SK-N-SH (cell line): ENCODE measurements at regions of chr10 and their contacts with region 1.

Region 1: GRCh38 chr10:97234400-97234799 is 48.6 kb upstream of the SLIT1 start:
- DNase-seq: peak; percentile 49
- H3K4me3 ChIP-seq: no peak overlapping the region
- H3K27ac ChIP-seq: no peak overlapping the region
- H3K4me1 ChIP-seq: no peaks in the 10 kb centered on the region
- H3K27me3 ChIP-seq: no peaks in the 10 kb centered on the region
- CTCF ChIP-seq: peak; percentile 82
- EP300 ChIP-seq: no peak
- RAD21 ChIP-seq: peak; percentile 84

Region 2: DNA sequence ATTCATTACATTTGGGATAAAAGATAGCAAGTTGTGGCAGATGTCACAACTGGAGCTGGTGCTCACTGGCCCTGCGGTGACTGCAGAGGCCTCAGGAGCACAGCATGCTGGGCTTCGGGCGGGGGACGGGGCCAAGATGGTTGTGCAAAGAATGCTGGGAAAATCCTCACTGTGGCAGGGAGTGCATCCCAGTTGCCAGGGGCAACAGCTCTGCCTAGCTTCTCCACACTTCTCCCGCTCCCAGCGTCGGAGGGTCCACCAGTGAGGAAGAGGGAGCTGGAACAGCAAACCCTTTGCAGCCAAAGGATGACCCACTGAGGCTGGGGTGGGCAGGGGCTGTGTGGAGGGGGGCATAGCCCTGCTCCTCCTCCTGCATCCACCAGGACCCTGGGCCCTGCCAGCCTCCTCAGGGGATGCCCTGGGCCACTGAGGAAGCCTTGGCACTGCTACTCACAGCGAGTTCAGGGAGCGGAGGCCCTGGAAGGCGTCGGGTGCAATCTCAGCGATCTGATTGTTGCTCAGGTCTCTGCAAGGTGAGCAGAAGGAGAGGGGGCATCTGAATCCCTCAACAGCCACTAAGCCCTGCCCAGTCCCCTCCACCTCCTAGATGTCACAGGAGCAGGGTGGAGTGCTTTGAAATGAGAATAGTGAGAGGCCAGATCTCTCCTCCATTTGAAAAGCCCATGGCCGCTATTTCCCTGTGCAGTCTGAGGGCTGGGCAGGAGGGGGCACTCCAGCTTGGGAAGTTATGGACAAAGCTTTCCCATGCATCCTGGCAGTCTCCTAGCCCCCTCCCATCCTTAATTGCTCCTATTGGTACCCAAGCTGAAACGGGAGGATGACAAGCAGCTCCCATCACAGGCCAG is 175.2 kb before region 1 on chr10:
- CTCF ChIA-PET with region 1: interaction called, 24 read pairs
- POLR2A ChIA-PET with region 1: no interaction called
- DNase-seq: peak; percentile 54
- H3K4me3 ChIP-seq: no peak overlapping the region
- H3K27ac ChIP-seq: no peak overlapping the region
- H3K4me1 ChIP-seq: peaks cover 0 to 5% of the 10 kb centered on the region in 2 experiments; a peak in 1 of 4 replicates
- H3K27me3 ChIP-seq: no peaks in the 10 kb centered on the region; the same call in 1 of the 2 replicates
- CTCF ChIP-seq: no peak
- EP300 ChIP-seq: no peak
- RAD21 ChIP-seq: 0 out of 2 replicates have a peak, but pooled peaks have one; percentile 10

Region 3: DNA sequence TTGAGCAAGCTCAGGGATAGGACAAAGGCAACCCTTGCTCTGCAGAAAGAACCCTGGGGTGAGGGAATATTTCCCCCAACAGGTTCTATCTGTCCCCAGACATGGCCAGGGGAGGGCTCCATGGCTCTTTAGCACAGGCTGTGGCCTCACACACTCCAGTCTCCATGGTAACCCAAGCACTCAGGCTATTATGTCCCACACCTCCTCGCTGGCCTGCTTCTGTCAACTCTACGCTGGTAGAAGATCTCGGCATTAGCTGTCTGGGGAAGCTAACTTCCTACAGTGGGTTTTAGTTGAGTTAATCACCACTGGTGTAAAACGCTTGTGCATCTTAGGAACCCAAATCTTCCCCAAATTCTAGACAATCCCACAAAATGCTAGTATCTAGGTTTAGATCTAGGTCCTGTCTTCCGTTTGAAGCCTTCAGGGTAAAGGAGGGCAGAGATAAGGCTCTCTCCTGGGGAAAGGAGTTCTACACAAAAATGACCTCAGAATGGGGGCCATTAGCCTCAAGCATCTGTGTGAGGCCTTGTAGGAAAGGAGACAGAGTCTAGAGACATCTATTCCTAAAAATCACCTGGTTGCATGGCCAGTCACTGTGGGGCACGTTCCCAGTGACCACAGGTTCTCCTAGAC is 12.0 kb before region 1 on chr10:
- CTCF ChIA-PET with region 1: interaction called, 47 read pairs
- POLR2A ChIA-PET with region 1: no interaction called
- DNase-seq: peak; percentile 46
- H3K4me3 ChIP-seq: no peak overlapping the region
- H3K27ac ChIP-seq: no peak overlapping the region
- H3K4me1 ChIP-seq: peaks cover 6 to 12% of the 10 kb centered on the region in 2 experiments; a peak in 3 of 4 replicates
- H3K27me3 ChIP-seq: no peaks in the 10 kb centered on the region
- CTCF ChIP-seq: no peak
- EP300 ChIP-seq: no peak
- RAD21 ChIP-seq: 0 out of 2 replicates have a peak, but pooled peaks have one; percentile 11